CD8-positive, alpha-beta T cell (primary cell): ENCODE measurements at regions of chr13 and their contacts with region 1.

Region 1: DNA sequence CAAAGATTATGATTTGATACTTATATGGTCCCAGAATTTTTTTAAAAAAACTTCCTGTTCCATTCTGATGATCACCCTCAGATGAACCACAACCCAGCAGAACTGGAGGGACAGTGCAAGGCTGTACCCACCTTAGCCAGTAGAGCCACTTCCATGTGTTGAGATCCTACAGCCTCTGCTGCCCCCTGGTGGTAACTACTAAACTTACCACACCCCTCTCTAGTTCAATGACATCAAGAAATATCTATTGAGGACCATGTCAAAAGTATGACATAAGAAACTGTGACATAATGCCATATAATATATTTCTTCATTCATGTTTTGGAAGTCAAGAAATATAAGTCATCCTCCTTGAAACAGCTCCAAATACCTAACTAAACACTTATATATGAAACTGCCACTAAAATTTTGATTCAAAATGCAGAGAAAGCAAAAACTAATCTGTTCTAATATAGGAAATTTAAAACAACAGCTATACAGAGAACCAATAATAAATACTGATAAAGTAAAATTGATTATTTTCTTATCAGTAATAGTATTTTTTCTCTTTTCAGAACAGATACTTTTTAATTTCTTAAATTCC is 412.6 kb downstream of the KCTD12 start:
- DNase-seq: peak; percentile 25 to 77 (median 68)
- ATAC-seq: peak; percentile 88
- H3K4me3 ChIP-seq: no peak overlapping the region
- H3K4me3 Mint-ChIP-seq: no peak overlapping the region
- H3K27ac ChIP-seq: no peak overlapping the region
- H3K27ac Mint-ChIP-seq: no peak overlapping the region
- H3K4me1 ChIP-seq: no peaks in the 10 kb centered on the region
- H3K4me1 Mint-ChIP-seq: no peaks in the 10 kb centered on the region
- H3K27me3 ChIP-seq: no peaks in the 10 kb centered on the region
- H3K27me3 Mint-ChIP-seq: peaks cover 8% of the 10 kb centered on the region
- CTCF ChIP-seq: peak; percentile 78

Region 2: GRCh38 chr13:75372517-75372916 is 1101.1 kb before region 1 on chr13:
- CTCF ChIA-PET with region 1: no interaction called
- POLR2A ChIA-PET with region 1: no interaction called
- intact Hi-C with region 1: loop called in 1 of 2 experiments (anchors 5 kb)
- DNase-seq: peak in 2 of 9 experiments; percentile 41 to 60
- ATAC-seq: peak; percentile 80
- H3K4me3 ChIP-seq: no peak overlapping the region
- H3K4me3 Mint-ChIP-seq: no peak overlapping the region
- H3K27ac ChIP-seq: no peak overlapping the region
- H3K27ac Mint-ChIP-seq: no peak overlapping the region
- H3K4me1 ChIP-seq: no peaks in the 10 kb centered on the region
- H3K4me1 Mint-ChIP-seq: no peaks in the 10 kb centered on the region
- H3K27me3 ChIP-seq: no peaks in the 10 kb centered on the region
- H3K27me3 Mint-ChIP-seq: peaks cover 3% of the 10 kb centered on the region
- CTCF ChIP-seq: peak; percentile 80

Region 3: GRCh38 chr13:75675421-75675820 is 798.2 kb before region 1 on chr13:
- CTCF ChIA-PET with region 1: interaction called, 3 read pairs
- POLR2A ChIA-PET with region 1: no interaction called
- intact Hi-C with region 1: loop called in 1 of 2 experiments (anchors 5 kb)
- DNase-seq: no peak
- ATAC-seq: no peak
- H3K4me3 ChIP-seq: no peak overlapping the region
- H3K4me3 Mint-ChIP-seq: no peak overlapping the region
- H3K27ac ChIP-seq: no peak overlapping the region
- H3K27ac Mint-ChIP-seq: no peak overlapping the region
- H3K4me1 ChIP-seq: no peaks in the 10 kb centered on the region
- H3K4me1 Mint-ChIP-seq: no peaks in the 10 kb centered on the region
- H3K27me3 ChIP-seq: no peaks in the 10 kb centered on the region
- H3K27me3 Mint-ChIP-seq: no peaks in the 10 kb centered on the region
- CTCF ChIP-seq: no peak

Region 4: DNA sequence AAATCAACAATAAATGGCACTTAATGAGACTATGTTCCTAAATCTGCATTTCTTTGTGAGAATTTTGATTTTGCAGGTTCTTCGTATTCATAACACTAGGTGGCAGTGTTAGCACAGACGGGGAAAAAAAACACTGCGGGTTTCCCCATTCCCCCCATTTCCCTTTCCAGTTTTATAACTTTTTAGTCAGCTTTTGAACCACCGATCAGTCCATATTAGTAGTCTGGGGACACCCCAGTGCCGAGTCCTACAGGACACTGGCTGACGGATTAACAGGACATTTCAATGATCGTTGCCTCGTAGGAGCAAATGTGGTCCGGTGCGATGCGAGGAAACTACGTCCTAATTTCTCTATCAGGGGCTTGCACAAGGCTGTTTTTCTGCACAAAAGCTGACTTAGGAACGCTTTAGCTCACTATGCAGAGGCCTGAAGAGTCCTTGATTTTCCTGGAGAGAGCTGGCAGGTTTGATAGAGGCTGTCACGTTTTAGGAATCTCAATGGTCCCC is 603.2 kb before region 1 on chr13:
- CTCF ChIA-PET with region 1: interaction called, 9 read pairs
- POLR2A ChIA-PET with region 1: no interaction called
- intact Hi-C with region 1: loop called in 1 of 2 experiments (anchors 2 kb)
- DNase-seq: peak in 4 of 9 experiments; percentile 3 to 54 (median 18)
- ATAC-seq: peak; percentile 62
- H3K4me3 ChIP-seq: peak overlapping the region; percentile 3 to 29
- H3K4me3 Mint-ChIP-seq: peak overlapping the region; percentile 76
- H3K27ac ChIP-seq: peak overlapping the region in 1 of 2 experiments; percentile 0
- H3K27ac Mint-ChIP-seq: peak overlapping the region; percentile 62
- H3K4me1 ChIP-seq: no peaks in the 10 kb centered on the region
- H3K4me1 Mint-ChIP-seq: peaks cover 17% of the 10 kb centered on the region
- H3K27me3 ChIP-seq: no peaks in the 10 kb centered on the region
- H3K27me3 Mint-ChIP-seq: peaks cover 5% of the 10 kb centered on the region
- CTCF ChIP-seq: peak; percentile 89

Region 5: DNA sequence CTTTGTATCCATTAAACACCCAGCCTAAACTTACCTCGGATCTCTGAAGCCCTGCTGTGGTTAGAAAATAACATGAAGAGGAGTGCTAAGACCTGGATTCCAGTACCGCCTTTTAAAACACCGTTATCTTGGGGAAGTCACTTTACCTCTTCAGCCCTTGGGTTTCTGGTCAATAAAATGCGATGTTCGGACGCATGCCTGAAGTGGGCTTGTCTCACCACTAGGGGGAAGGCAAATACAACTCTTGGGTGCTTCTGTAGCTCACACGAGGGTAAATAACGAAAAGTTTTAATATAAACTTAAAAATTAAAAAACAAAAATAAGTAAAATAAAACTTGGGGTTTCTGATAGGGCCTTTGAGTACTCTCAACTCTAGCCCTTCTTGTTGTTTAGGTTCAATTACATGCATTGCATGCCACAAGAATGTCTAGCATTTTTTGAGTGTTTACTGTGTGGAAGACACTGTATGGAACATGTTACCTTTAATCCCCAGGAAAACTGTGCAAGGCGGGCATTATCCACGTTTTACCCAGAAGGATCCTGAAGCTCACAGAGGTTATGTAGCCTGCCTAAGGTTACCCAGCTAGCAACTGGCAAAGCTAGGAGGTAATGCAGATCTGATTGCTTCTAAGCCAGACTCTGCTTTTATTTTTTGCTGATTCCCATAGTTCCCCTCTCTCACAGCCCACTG is 597.1 kb before region 1 on chr13:
- CTCF ChIA-PET with region 1: interaction called, 7 read pairs
- POLR2A ChIA-PET with region 1: no interaction called
- intact Hi-C with region 1: loop called (anchors 1 to 2 kb)
- DNase-seq: peak; percentile 8 to 69 (median 46)
- ATAC-seq: peak; percentile 95
- H3K4me3 ChIP-seq: no peak overlapping the region
- H3K4me3 Mint-ChIP-seq: peak overlapping the region; percentile 52
- H3K27ac ChIP-seq: no peak overlapping the region
- H3K27ac Mint-ChIP-seq: no peak overlapping the region
- H3K4me1 ChIP-seq: no peaks in the 10 kb centered on the region
- H3K4me1 Mint-ChIP-seq: peaks cover 17% of the 10 kb centered on the region
- H3K27me3 ChIP-seq: no peaks in the 10 kb centered on the region
- H3K27me3 Mint-ChIP-seq: peaks cover 2% of the 10 kb centered on the region
- CTCF ChIP-seq: peak; percentile 87